ENCODE measurements at regions of chr7 and their contacts with region 1.

Region 1: DNA sequence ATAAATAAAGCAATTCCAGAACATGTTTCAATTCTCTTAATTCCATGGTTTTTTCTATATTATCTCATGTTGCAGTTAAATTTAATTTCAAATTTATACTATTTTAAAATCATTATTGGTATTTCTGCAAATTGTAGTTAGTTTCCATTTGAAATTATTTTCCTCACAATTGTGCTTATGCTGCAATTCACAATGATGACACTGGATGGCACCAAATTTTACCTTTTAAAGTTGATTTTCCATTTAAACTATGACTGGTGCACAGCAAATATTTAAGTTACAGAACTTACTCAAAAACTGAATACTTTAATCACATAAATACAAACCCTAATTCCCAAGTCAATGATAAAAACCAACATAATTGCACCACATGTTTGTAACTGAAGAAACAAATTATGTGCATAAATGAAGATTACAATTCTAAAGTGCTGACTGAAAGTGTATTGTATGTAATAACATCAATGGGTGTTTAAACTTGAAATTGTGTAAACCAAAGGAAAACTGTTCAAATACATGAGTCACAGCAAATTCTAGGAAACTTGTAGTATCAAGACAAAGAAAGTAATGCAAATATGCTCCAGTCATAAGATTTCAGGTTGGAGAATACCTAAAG is 75.3 kb upstream of the AASS start:
- DNase-seq: no peak
- ATAC-seq: peak; percentile 32 to 75 (median 72)
- H3K4me3 ChIP-seq: no peak overlapping the region
- H3K27ac ChIP-seq: no peak overlapping the region
- H3K4me1 ChIP-seq: no peaks in the 10 kb centered on the region
- H3K27me3 ChIP-seq: no peaks in the 10 kb centered on the region
- CTCF ChIP-seq: peak; percentile 11 to 60 (median 44)

Region 2: DNA sequence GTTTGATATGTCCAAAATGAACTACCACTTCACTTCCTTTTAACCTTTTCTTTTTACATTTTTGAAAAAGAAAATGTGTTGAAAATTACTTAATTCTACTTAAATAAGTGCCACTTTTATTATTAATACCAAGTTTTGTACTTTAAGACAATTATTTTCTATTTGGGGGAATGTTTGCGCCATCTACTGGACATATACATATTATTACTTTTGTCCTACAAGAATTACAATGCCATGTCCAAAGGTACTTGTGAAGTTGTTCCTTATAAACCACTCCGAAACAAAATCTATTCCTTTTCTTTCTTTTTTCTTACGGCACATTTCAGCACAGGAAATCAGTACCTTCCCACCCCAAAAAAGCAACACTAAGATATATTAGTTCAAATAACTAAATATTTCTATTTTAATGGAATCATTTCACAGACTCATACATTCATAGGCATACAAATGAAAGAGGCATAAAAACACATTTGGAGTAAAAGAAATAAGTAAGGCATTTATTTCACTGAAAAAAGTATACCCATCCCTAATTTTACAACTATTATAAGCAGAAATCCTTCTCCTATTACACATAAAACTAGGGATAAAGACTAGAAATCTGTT is 309.6 kb after region 1 on chr7:
- intact Hi-C with region 1: loop called in 2 of 3 experiments (anchors 5 to 10 kb)
- DNase-seq: no peak
- ATAC-seq: peak in 3 of 4 donors; percentile 61 to 67 (median 67)
- H3K4me3 ChIP-seq: no peak overlapping the region
- H3K27ac ChIP-seq: no peak overlapping the region
- H3K4me1 ChIP-seq: no peaks in the 10 kb centered on the region
- H3K27me3 ChIP-seq: no peaks in the 10 kb centered on the region
- CTCF ChIP-seq: peak; percentile 12 to 60 (median 31)

Measured in pancreas (tissue), 10 donors.